Activated CD4-positive, alpha-beta T cell treated with anti-CD3 and anti-CD28 coated beads for 36 hours (primary cell): ENCODE measurements at regions of chr14 and their contacts with region 1.

Region 1: DNA sequence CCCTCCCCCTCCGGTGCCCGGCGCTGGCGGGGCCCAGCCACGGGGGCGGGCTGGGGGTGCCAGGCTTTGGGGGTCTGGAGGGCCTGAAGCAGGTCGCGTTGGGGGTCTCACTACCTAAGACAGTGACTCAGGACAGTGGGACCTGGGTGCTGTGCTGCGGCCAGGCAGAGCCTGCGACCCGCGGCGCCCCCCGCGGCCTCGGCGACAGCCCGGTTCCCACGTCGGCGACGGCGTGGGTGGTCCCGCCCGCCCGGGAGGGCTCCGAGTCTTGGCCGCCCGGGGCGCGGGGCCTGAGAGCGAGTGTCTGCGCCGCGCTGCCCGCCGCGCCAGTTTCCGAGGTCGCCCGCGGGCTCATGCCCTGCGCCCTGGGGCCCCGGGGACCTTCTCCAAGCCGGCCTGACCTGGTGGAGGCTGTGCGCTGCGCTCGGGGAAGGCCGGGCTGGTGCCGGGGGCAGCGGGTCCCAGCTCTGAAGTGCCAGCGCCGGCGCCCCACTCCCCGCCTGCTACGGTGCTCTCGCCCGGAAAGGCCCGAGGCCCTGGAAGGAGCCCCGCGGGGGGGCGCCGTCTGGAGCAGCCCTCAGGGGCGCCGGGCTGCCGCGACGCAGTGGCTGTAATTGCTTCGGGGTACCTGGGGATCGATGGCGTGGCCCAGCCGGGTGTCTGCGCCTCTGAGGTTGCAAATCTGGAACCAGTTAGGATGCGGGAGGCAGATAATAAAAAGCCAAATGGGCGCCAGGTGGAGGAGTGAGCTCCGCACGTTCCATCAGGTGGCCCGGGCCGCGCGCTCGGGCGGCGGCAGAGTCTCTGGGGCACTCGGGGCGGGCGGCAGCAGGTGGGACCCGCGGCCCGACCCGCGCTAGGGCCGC is 102.5 kb upstream of the DIO3 start:
- DNase-seq: no peak
- ATAC-seq: no peak
- H3K4me3 Mint-ChIP-seq: no peak overlapping the region
- H3K27ac Mint-ChIP-seq: no peak overlapping the region
- H3K4me1 Mint-ChIP-seq: peaks cover 4% of the 10 kb centered on the region
- H3K27me3 Mint-ChIP-seq: peaks cover 45% of the 10 kb centered on the region

Region 2: GRCh38 chr14:101004954-101005353 is 453.8 kb before region 1 on chr14:
- CTCF ChIA-PET with region 1: no interaction called
- POLR2A ChIA-PET with region 1: no interaction called
- intact Hi-C with region 1: no loop called
- DNase-seq: no peak
- ATAC-seq: no peak
- H3K4me3 Mint-ChIP-seq: no peak overlapping the region
- H3K27ac Mint-ChIP-seq: no peak overlapping the region
- H3K4me1 Mint-ChIP-seq: no peaks in the 10 kb centered on the region
- H3K27me3 Mint-ChIP-seq: peaks cover 23% of the 10 kb centered on the region

Region 3: DNA sequence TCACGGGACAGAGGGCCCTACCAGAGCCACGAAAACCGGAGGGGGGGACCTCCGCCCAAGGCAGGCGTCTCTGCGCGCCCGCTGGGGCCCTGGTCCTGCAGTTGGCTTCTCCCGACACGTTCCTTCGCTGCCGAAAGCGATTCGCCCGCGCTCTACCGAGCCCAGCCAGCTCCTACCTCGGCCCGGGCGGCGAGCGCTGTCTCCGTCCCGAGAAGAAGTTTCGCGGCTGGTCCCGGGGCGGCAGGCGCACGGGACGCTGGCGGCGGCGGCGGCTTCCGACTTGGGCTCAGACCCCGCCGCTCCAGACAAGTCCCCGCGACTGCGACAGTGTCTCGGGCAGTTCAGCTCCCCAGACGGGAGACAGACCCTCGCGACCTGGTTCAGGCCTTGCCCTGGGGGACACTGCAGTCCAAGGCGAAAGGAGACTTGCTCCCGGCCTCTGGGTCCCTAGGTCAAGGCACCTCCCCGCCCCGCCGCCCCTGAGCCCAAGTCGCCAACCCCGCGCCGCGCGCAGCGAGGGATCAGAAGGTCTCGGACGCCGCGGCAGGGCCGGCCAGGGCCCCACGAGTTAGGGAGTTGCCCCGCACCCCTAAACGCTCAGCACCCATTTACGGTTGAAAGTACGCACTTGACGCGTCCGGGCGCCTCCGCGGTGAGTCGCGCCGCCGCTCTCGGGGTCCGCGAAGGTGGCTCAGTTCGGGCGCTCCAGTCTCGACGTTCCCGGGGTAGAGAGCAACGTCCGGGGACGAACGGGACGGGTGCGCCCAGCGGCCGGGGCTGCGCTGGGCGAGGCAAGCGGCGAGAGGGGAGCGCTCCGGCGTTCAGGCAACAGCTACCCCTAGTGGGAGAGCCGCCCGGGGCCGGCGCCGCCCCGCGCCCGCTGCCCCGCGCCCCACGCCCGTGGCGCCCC is 101.1 kb after region 1 on chr14:
- CTCF ChIA-PET with region 1: no interaction called
- POLR2A ChIA-PET with region 1: no interaction called
- intact Hi-C with region 1: loop called (anchors 5 to 10 kb)
- DNase-seq: peak; percentile 38
- ATAC-seq: peak; percentile 39
- H3K4me3 Mint-ChIP-seq: no peak overlapping the region
- H3K27ac Mint-ChIP-seq: no peak overlapping the region
- H3K4me1 Mint-ChIP-seq: peaks cover 3% of the 10 kb centered on the region
- H3K27me3 Mint-ChIP-seq: peaks cover 40% of the 10 kb centered on the region